ENCODE measurements at regions of chr9 and their contacts with region 1.

Region 1: DNA sequence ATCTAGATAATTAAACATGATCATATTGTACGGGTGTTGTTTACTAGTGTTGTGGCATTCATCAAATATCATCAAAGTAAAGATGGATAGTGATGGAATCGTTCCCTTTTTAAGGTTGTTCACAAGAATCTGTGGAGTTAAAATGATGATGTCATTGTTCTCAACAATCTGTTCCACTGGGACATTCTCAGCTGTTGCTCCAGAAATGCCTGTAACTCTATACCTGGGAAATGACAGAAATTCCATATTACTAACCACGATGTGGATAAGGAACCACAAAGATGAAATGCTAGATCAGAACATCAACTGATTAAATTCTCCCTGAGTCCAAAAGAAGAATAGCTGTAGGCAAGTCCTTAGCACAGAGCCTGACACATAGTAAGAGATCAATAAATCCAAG is 38.0 kb downstream of the RIGI start:
- DNase-seq: no peak
- ATAC-seq: no peak
- H3K4me3 ChIP-seq: no peak overlapping the region
- H3K27ac ChIP-seq: no peak overlapping the region
- H3K4me1 ChIP-seq: peaks cover 17% of the 10 kb centered on the region
- H3K27me3 ChIP-seq: no peaks in the 10 kb centered on the region
- CTCF ChIP-seq: no peak
- EP300 ChIP-seq: no peak
- POLR2A ChIP-seq: no peak
- RAD21 ChIP-seq: no peak

Region 2: GRCh38 chr9:32456564-32456963 is 31.4 kb before region 1 on chr9:
- CTCF ChIA-PET with region 1: no interaction called
- POLR2A ChIA-PET with region 1: no interaction called
- in situ Hi-C with region 1: no loop called
- intact Hi-C with region 1: loop called (anchors 1 kb)
- DNase-seq: peak; percentile 82
- ATAC-seq: peak; percentile 96
- H3K4me3 ChIP-seq: no peak overlapping the region
- H3K27ac ChIP-seq: peak overlapping the region; percentile 66
- H3K4me1 ChIP-seq: peaks cover 28% of the 10 kb centered on the region
- H3K27me3 ChIP-seq: no peaks in the 10 kb centered on the region
- CTCF ChIP-seq: no peak
- EP300 ChIP-seq: peak; percentile 24 to 81; a peak in 2 of 4 replicates
- POLR2A ChIP-seq: no peak
- RAD21 ChIP-seq: no peak